ENCODE measurements at regions of chr11 and their contacts with region 1.

Region 1: GRCh38 chr11:62081378-62082291 is 42.2 kb upstream of the INCENP start:
- DNase-seq: peak; percentile 52 to 85 (median 73)
- ATAC-seq: peak; percentile 69 to 89 (median 84)
- H3K4me3 ChIP-seq: no peak overlapping the region
- H3K4me3 Mint-ChIP-seq: peak overlapping the region in 2 of 3 donors; percentile 11 to 51
- H3K27ac ChIP-seq: no peak overlapping the region
- H3K27ac Mint-ChIP-seq: no peak overlapping the region
- H3K4me1 ChIP-seq: peaks cover 0 to 6% of the 10 kb centered on the region in 2 experiments
- H3K4me1 Mint-ChIP-seq: peaks cover 0 to 9% (median 8%) of the 10 kb centered on the region in 3 donors
- H3K27me3 ChIP-seq: peaks cover 0 to 8% of the 10 kb centered on the region in 2 experiments
- H3K27me3 Mint-ChIP-seq: peaks cover 0 to 4% of the 10 kb centered on the region in 2 donors

Region 2: GRCh38 chr11:61541598-61541997 is 540.0 kb before region 1 on chr11:
- CTCF ChIA-PET with region 1: no interaction called
- POLR2A ChIA-PET with region 1: no interaction called
- DNase-seq: no peak
- ATAC-seq: no peak
- H3K4me3 ChIP-seq: no peak overlapping the region
- H3K4me3 Mint-ChIP-seq: no peak overlapping the region
- H3K27ac ChIP-seq: no peak overlapping the region
- H3K27ac Mint-ChIP-seq: no peak overlapping the region
- H3K4me1 ChIP-seq: no peaks in the 10 kb centered on the region
- H3K4me1 Mint-ChIP-seq: peaks cover 0 to 10% (median 1%) of the 10 kb centered on the region in 3 donors
- H3K27me3 ChIP-seq: peaks cover 0 to 58% of the 10 kb centered on the region in 2 experiments
- H3K27me3 Mint-ChIP-seq: peaks cover 33 to 35% of the 10 kb centered on the region in 2 donors

Region 3: DNA sequence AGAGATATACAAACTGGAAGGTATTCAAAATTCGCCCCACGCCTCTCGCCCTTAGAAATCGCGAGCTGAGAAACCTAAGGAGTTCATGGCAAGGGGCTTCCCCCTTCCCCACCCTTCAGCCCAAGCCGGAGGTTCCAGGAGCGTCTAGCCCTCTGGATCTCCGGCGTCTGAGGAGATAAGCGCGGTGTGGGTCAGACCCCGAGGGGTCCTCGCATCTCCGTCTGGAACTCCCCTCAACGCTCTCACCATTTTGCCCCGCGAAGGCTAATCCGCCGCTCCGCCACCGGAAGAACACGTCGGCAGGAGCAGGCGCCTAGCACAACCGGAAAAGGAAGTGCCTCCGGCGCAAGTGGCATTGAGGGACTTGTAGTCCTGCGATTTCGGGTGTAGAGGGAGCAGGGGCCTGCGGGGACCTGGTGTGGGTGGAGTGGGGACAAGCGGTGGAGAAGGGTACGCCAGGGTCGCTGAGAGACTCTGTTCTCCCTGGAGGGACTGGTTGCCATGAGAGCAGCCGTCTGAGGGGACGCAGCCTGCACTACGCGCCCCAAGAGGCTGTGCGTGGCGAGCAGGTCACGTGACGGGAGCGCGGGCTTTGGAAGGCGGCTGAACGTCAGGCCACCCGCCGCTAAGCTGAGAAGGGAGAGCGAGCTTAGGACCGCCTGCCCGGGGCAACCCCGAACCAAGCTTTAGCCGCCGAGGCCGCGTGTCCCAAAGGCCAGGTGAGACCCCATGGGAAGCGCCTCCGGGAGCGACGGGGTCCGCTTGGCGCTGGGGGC is 289.1 kb before region 1 on chr11 and contains the starts of genes FEN1 and TMEM258:
- CTCF ChIA-PET with region 1: interaction called in 1 of 2 experiments, 52 read pairs
- POLR2A ChIA-PET with region 1: no interaction called
- DNase-seq: peak; percentile 79 to 91 (median 83)
- ATAC-seq: peak; percentile 90 to 94 (median 93)
- H3K4me3 ChIP-seq: peak within 1 kb of the TSS; percentile 73 to 76
- H3K4me3 Mint-ChIP-seq: peak within 1 kb of the TSS; percentile 83 to 98 (median 89)
- H3K27ac ChIP-seq: peak within 1 kb of the TSS; percentile 94
- H3K27ac Mint-ChIP-seq: peak within 1 kb of the TSS; percentile 95 to 98
- H3K4me1 ChIP-seq: peaks cover 8 to 25% of the 10 kb centered on the region in 2 experiments
- H3K4me1 Mint-ChIP-seq: peaks cover 27 to 43% (median 40%) of the 10 kb centered on the region in 3 donors
- H3K27me3 ChIP-seq: no peaks in the 10 kb centered on the region
- H3K27me3 Mint-ChIP-seq: no peaks in the 10 kb centered on the region
- total RNA-seq, gene FEN1: 8.5 to 12.6 (median 10.9) TPM
- total RNA-seq, gene TMEM258: 68.1 to 96.0 (median 87.8) TPM

Region 4: GRCh38 chr11:61899146-61899841 is 182.3 kb before region 1 on chr11:
- CTCF ChIA-PET with region 1: interaction called, 18 to 100 read pairs
- POLR2A ChIA-PET with region 1: interaction called in 1 of 2 experiments, 3 read pairs
- DNase-seq: peak; percentile 82 to 97 (median 91)
- ATAC-seq: peak; percentile 89 to 92 (median 92)
- H3K4me3 ChIP-seq: no peak overlapping the region
- H3K4me3 Mint-ChIP-seq: no peak overlapping the region
- H3K27ac ChIP-seq: no peak overlapping the region
- H3K27ac Mint-ChIP-seq: peak overlapping the region; percentile 44 to 63
- H3K4me1 ChIP-seq: peaks cover 0 to 12% of the 10 kb centered on the region in 2 experiments
- H3K4me1 Mint-ChIP-seq: peaks cover 6 to 12% (median 8%) of the 10 kb centered on the region in 3 donors
- H3K27me3 ChIP-seq: peaks cover 0 to 9% of the 10 kb centered on the region in 2 experiments
- H3K27me3 Mint-ChIP-seq: peaks cover 0 to 3% of the 10 kb centered on the region in 2 donors

Region 5: GRCh38 chr11:61967116-61967923 is 114.3 kb before region 1 on chr11 and contains the start of gene FTH1:
- CTCF ChIA-PET with region 1: interaction called, 5 to 36 read pairs
- POLR2A ChIA-PET with region 1: interaction called, 6 to 8 read pairs
- DNase-seq: peak; percentile 82 to 95 (median 89)
- ATAC-seq: peak; percentile 81 to 92 (median 88)
- H3K4me3 ChIP-seq: peak within 1 kb of the TSS; percentile 85 to 100
- H3K4me3 Mint-ChIP-seq: peak within 1 kb of the TSS; percentile 93 to 94 (median 94)
- H3K27ac ChIP-seq: peak within 1 kb of the TSS; percentile 91
- H3K27ac Mint-ChIP-seq: peak within 1 kb of the TSS; percentile 95 to 97
- H3K4me1 ChIP-seq: peaks cover 31 to 52% of the 10 kb centered on the region in 2 experiments
- H3K4me1 Mint-ChIP-seq: peaks cover 64 to 72% (median 67%) of the 10 kb centered on the region in 3 donors
- H3K27me3 ChIP-seq: no peaks in the 10 kb centered on the region
- H3K27me3 Mint-ChIP-seq: no peaks in the 10 kb centered on the region
- total RNA-seq, gene FTH1: 575 to 1,574 (median 654) TPM

Region 6: GRCh38 chr11:62054484-62055121 is 27.0 kb before region 1 on chr11:
- CTCF ChIA-PET with region 1: interaction called in 1 of 2 experiments, 10 read pairs
- POLR2A ChIA-PET with region 1: no interaction called
- DNase-seq: peak in 20 of 35 experiments; percentile 3 to 58 (median 12)
- ATAC-seq: no peak
- H3K4me3 ChIP-seq: no peak overlapping the region
- H3K4me3 Mint-ChIP-seq: no peak overlapping the region
- H3K27ac ChIP-seq: no peak overlapping the region
- H3K27ac Mint-ChIP-seq: no peak overlapping the region
- H3K4me1 ChIP-seq: no peaks in the 10 kb centered on the region
- H3K4me1 Mint-ChIP-seq: no peaks in the 10 kb centered on the region
- H3K27me3 ChIP-seq: no peaks in the 10 kb centered on the region
- H3K27me3 Mint-ChIP-seq: peaks cover 0 to 4% of the 10 kb centered on the region in 2 donors

Region 7: GRCh38 chr11:62143727-62144126 is 62.1 kb after region 1 on chr11:
- CTCF ChIA-PET with region 1: no interaction called
- POLR2A ChIA-PET with region 1: no interaction called
- DNase-seq: no peak
- ATAC-seq: no peak
- H3K4me3 ChIP-seq: no peak overlapping the region
- H3K4me3 Mint-ChIP-seq: no peak overlapping the region
- H3K27ac ChIP-seq: no peak overlapping the region
- H3K27ac Mint-ChIP-seq: no peak overlapping the region
- H3K4me1 ChIP-seq: no peaks in the 10 kb centered on the region
- H3K4me1 Mint-ChIP-seq: no peaks in the 10 kb centered on the region
- H3K27me3 ChIP-seq: no peaks in the 10 kb centered on the region
- H3K27me3 Mint-ChIP-seq: no peaks in the 10 kb centered on the region

Region 8: DNA sequence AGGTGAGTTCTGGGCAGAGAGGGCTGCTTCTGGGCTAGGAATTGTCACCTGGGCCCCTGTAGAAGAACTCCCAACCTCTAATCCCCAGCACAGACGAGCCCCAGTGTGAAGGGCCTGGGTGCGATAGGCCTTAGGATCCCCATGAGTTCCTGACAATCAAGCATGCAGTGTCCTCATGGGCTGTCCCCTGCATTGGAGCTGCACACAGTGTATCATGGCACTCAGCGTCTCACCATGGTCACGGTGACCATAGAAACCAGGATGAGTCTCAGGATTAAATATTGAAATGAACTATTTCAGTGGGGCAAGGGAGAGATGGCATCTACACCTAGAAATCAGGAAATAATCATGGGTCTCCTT is 127.1 kb after region 1 on chr11:
- CTCF ChIA-PET with region 1: no interaction called
- POLR2A ChIA-PET with region 1: no interaction called
- DNase-seq: no peak
- ATAC-seq: no peak
- H3K4me3 ChIP-seq: no peak overlapping the region
- H3K4me3 Mint-ChIP-seq: no peak overlapping the region
- H3K27ac ChIP-seq: no peak overlapping the region
- H3K27ac Mint-ChIP-seq: no peak overlapping the region
- H3K4me1 ChIP-seq: no peaks in the 10 kb centered on the region
- H3K4me1 Mint-ChIP-seq: no peaks in the 10 kb centered on the region
- H3K27me3 ChIP-seq: peaks cover 0 to 28% of the 10 kb centered on the region in 2 experiments
- H3K27me3 Mint-ChIP-seq: peaks cover 14 to 20% of the 10 kb centered on the region in 2 donors